ENCODE measurements at regions of chr2 and their contacts with region 1.

Region 1: GRCh38 chr2:127675331-127676261 is at the start of gene LIMS2:
- DNase-seq: peak; percentile 36
- H3K4me3 ChIP-seq: peak within 1 kb of the TSS; percentile 48 to 58 (median 58)
- H3K27ac ChIP-seq: no peak within 1 kb of the TSS
- H3K4me1 ChIP-seq: peaks cover 18% of the 10 kb centered on the region
- H3K27me3 ChIP-seq: no peaks in the 10 kb centered on the region
- CTCF ChIP-seq: peak in 1 of 2 donors; percentile 37
- POLR2A ChIP-seq: no peak
- total RNA-seq, gene LIMS2: 45.7 and 48.3 TPM in 2 replicates

Region 2: DNA sequence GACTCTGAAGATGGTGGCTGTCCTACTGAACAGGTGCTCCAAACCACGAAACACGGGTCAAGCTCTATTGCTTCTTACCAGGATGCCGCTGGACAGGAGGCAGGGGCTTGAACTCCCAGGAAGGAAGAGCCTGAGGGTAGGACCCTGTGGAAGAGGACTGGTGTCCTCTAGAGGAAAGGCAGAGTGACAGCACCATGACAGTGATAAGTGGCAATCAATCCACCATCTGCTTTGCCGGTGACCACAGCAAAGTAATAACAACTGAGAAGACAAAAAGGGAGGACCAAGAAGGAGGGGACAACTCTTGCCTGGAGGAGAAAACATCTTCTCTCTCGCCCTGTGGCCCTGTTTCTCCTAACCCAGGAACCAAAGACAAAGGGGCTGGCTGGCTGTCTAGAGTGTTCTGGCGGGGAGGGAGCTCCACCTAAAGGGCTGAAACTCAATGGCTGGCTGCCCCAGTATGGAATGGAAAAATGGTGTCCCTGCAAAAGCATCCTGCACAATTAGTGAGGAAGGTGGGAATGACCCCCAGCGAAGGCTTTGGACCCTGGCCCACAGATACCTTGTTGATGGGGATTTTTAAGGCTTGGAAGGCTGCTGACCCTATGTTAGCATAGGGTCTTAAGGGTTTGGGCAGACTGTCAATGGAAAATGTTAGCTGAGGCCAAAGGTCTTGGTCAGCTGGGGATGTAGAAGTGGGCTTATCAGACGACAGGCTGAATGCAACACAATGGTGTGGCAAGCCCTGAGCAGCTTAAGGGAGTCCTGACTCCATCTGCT is 222.0 kb before region 1 on chr2:
- CTCF ChIA-PET with region 1: no interaction called
- POLR2A ChIA-PET with region 1: no interaction called
- dilution Hi-C with region 1: no loop called
- intact Hi-C with region 1: no loop called
- DNase-seq: peak; percentile 5
- H3K4me3 ChIP-seq: no peak overlapping the region
- H3K27ac ChIP-seq: no peak overlapping the region
- H3K4me1 ChIP-seq: no peaks in the 10 kb centered on the region
- H3K27me3 ChIP-seq: no peaks in the 10 kb centered on the region
- CTCF ChIP-seq: peak; percentile 2 to 12
- POLR2A ChIP-seq: no peak

Region 3: GRCh38 chr2:127649684-127650040 is 25.9 kb before region 1 on chr2:
- CTCF ChIA-PET with region 1: interaction called, 61 read pairs
- POLR2A ChIA-PET with region 1: interaction called, 3 read pairs
- dilution Hi-C with region 1: no loop called
- intact Hi-C with region 1: loop called (anchors 2 kb)
- DNase-seq: peak; percentile 69
- H3K4me3 ChIP-seq: no peak overlapping the region
- H3K27ac ChIP-seq: no peak overlapping the region
- H3K4me1 ChIP-seq: peaks cover 25% of the 10 kb centered on the region
- H3K27me3 ChIP-seq: no peaks in the 10 kb centered on the region
- CTCF ChIP-seq: peak; percentile 85 to 88
- POLR2A ChIP-seq: no peak

Region 4: DNA sequence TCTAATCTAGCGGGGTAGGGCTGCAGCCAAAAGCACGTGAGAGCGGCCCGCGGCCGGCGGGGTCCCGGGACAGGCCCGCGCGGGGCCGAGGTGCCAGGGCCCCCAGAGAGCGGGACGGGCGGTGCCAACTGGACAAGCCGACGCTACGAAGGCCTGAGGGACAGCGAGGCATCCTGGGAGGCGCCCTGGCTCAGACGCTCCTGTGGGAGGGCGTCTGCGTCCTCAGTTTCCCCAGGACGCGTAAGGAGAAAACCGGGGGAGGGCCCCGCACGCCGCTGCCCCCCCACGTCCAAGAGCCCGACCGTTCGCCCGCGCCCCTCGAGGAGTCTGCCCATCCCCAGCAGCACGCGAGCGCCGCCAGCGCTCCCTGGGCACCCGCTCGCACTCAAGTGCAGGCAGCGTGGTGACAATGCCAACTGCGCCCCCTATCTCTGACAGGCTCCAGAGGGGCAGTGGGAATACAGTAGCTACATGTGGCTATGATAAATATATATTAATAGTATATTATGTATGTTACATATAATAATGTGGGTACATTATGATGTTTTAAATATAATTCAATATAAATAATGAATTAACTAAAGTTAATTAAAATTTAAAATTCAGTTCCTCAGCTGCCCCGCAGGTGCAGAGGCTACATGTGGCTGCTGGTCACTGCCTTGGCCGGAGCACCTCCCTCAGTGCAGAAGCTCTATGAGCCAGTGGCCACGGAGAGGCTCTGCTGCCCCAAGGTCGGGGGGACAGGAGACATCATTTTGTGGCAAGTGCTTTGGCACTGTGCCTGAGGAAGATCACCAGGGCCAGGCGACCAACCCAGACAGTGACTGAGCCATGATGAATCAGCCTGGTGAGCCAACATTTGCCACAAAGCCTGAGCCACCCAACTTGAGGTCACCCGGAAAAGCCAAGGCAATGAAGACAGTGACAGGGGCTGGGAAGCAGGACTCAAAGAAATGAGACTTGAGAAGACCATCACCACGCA is 20.2 kb after region 1 on chr2:
- CTCF ChIA-PET with region 1: interaction called, 39 read pairs
- POLR2A ChIA-PET with region 1: interaction called, 3 read pairs
- dilution Hi-C with region 1: no loop called
- intact Hi-C with region 1: loop called (anchors 1 kb)
- DNase-seq: peak; percentile 75
- H3K4me3 ChIP-seq: peak overlapping the region in 2 of 3 experiments; percentile 21 to 22
- H3K27ac ChIP-seq: no peak overlapping the region
- H3K4me1 ChIP-seq: peaks cover 8% of the 10 kb centered on the region
- H3K27me3 ChIP-seq: no peaks in the 10 kb centered on the region
- CTCF ChIP-seq: peak; percentile 60 to 73
- POLR2A ChIP-seq: no peak

Region 5: DNA sequence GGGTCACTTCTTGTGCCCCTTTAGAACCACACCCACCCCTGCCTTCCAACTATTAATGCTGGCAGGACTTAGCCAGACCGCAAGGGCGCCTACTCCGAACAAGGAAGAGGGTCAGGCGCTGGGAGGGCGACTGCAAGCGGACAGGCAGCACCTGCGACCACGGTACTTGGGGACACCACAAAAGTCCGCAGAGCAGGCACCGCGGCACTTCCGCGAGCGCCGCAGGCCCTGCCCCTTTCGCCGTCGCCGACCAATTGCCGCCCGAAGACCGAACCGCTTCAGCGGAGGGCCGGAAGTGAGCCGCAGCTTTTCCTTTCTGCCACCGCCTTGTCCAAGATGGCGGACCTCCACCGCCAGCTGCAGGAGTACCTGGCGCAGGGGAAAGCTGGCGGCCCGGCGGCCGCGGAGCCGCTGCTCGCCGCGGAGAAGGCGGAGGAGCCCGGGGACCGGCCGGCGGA is 25.6 kb after region 1 on chr2 and contains the start of gene SFT2D3:
- CTCF ChIA-PET with region 1: interaction called, 39 read pairs
- POLR2A ChIA-PET with region 1: interaction called, 3 read pairs
- dilution Hi-C with region 1: no loop called
- intact Hi-C with region 1: loop called (anchors 1 kb)
- DNase-seq: peak; percentile 91
- H3K4me3 ChIP-seq: peak within 1 kb of the TSS; percentile 40 to 79 (median 45)
- H3K27ac ChIP-seq: peak within 1 kb of the TSS; percentile 85
- H3K4me1 ChIP-seq: peaks cover 17% of the 10 kb centered on the region
- H3K27me3 ChIP-seq: no peaks in the 10 kb centered on the region
- CTCF ChIP-seq: no peak
- POLR2A ChIP-seq: peak; percentile 99
- total RNA-seq, gene SFT2D3: 4.4 and 4.7 TPM in 2 replicates